ENCODE measurements at regions of chr5 and their contacts with region 1.

Region 1: GRCh38 chr5:78984439-78985115 is 533 bp downstream of the ARSB start:
- DNase-seq: peak; percentile 81
- H3K4me3 Mint-ChIP-seq: peak overlapping the region; percentile 85
- H3K27ac Mint-ChIP-seq: peak overlapping the region; percentile 90
- H3K4me1 Mint-ChIP-seq: peaks cover 44% of the 10 kb centered on the region
- H3K27me3 Mint-ChIP-seq: peaks cover 8% of the 10 kb centered on the region

Region 2: GRCh38 chr5:77775790-77776553 is 1208.6 kb before region 1 on chr5 and contains the start of gene TBCA:
- intact Hi-C with region 1: loop called (anchors 2 kb)
- DNase-seq: peak; percentile 92
- H3K4me3 Mint-ChIP-seq: peak within 1 kb of the TSS; percentile 91
- H3K27ac Mint-ChIP-seq: peak within 1 kb of the TSS; percentile 97
- H3K4me1 Mint-ChIP-seq: peaks cover 48% of the 10 kb centered on the region
- H3K27me3 Mint-ChIP-seq: peaks cover 2% of the 10 kb centered on the region
- total RNA-seq, gene TBCA: 179 and 212 TPM in 2 replicates

Region 3: GRCh38 chr5:78757269-78758053 is 227.1 kb before region 1 on chr5:
- intact Hi-C with region 1: loop called (anchors 2 kb)
- DNase-seq: peak; percentile 9
- H3K4me3 Mint-ChIP-seq: peak overlapping the region; percentile 55
- H3K27ac Mint-ChIP-seq: peak overlapping the region; percentile 76
- H3K4me1 Mint-ChIP-seq: peaks cover 31% of the 10 kb centered on the region
- H3K27me3 Mint-ChIP-seq: no peaks in the 10 kb centered on the region

Region 4: GRCh38 chr5:78953092-78953800 is 31.3 kb before region 1 on chr5:
- intact Hi-C with region 1: loop called (anchors 1 kb)
- DNase-seq: no peak
- H3K4me3 Mint-ChIP-seq: no peak overlapping the region
- H3K27ac Mint-ChIP-seq: peak overlapping the region; percentile 59
- H3K4me1 Mint-ChIP-seq: peaks cover 21% of the 10 kb centered on the region
- H3K27me3 Mint-ChIP-seq: no peaks in the 10 kb centered on the region

Region 5: DNA sequence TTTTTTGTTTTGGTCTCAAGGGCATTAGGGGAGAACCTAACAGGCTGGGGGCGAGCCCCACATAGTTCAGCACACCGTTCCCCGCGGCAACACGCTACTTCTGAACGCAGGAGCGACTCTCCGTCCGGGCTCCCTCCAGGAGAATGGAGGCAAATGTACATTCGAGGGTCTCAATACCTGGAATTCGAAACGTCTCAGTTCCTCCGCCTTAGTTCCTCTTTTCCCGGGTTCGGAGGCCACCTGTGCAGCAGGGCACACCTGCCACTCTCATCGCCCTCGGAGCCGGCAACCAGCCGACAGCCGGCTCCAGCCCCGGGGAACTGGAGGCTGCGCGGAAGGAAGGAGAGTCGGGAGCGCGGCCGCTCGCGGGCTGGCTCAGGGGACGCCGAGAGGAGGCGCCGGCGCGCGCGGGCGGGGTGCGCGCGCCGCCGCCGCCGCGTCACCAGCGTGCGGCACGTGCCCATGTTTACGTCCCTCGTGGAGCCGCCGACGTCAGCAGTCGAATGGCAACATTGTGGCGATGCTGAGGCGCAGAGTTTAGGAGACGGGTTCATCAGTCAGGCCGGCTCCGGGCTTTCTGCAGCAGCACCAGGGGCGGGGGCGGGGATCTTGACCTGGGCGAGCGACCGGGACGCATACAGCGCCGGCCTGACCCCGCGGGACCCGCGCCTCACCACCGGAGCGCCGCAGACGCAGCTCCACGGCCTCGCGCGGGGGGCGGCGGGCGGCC is 251.2 kb after region 1 on chr5 and contains the start of gene JMY:
- intact Hi-C with region 1: loop called (anchors 1 kb)
- DNase-seq: peak; percentile 77
- H3K4me3 Mint-ChIP-seq: peak within 1 kb of the TSS; percentile 94
- H3K27ac Mint-ChIP-seq: peak within 1 kb of the TSS; percentile 95
- H3K4me1 Mint-ChIP-seq: peaks cover 33% of the 10 kb centered on the region
- H3K27me3 Mint-ChIP-seq: peaks cover 2% of the 10 kb centered on the region
- total RNA-seq, gene JMY: 5.5 and 5.9 TPM in 2 replicates

Region 6: GRCh38 chr5:80654391-80655230 is 1670.0 kb after region 1 on chr5 and contains the starts of genes DHFR and MSH3:
- intact Hi-C with region 1: loop called (anchors 2 kb)
- DNase-seq: peak; percentile 84
- H3K4me3 Mint-ChIP-seq: peak within 1 kb of the TSS; percentile 93
- H3K27ac Mint-ChIP-seq: peak within 1 kb of the TSS; percentile 98
- H3K4me1 Mint-ChIP-seq: peaks cover 37% of the 10 kb centered on the region
- H3K27me3 Mint-ChIP-seq: no peaks in the 10 kb centered on the region
- total RNA-seq, gene DHFR: 55.9 and 60.3 TPM in 2 replicates
- total RNA-seq, gene MSH3: 20.2 and 20.7 TPM in 2 replicates

Measured in activated T-helper 1 cell treated with anti-CD3 and anti-CD28 coated beads, Interleukin-12 subunit alpha, Interleukin-12 subunit beta, Interleukin-2, Interleukin-4 antibody, amounts not matched to agents 30 ng/mL and 10 ng/mL and 1 ng/mL, durations not matched to agents 14 hours and 24 hours and 36 hours (primary cell).